Aorta (tissue), 5 donors: ENCODE measurements at regions of chr16 and their contacts with region 1.

Region 1: GRCh38 chr16:57863434-57864160 is 61.3 kb upstream of the KIFC3 start:
- DNase-seq: peak; percentile 77 to 82
- ATAC-seq: peak; percentile 82
- H3K4me3 ChIP-seq: no peak overlapping the region
- H3K27ac ChIP-seq: no peak overlapping the region
- H3K4me1 ChIP-seq: no peaks in the 10 kb centered on the region
- H3K27me3 ChIP-seq: peaks cover 0 to 1% of the 10 kb centered on the region in 2 donors

Region 2: DNA sequence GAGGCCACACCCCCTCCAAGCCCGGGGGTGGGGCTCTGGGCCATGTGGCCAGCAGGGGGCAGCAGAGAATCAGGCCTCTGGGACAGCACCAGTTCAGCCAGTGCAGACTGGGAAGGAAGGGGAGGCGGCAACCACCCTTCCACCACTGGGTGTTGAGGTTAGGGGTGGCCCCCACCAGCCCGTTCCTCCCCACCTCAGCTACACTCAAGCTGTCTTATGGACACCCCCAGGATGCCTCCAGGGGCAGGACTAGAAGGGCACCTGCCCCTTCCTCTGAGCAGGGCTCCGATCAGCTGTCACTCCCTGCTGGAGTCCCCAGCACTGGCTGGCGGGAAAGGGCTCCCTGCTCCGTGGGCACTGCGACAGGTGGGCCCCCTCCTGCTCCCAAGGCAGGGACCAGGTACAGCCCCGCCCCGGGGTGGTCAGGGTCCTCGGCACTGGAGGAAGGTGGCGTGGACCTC is 106.2 kb before region 1 on chr16:
- intact Hi-C with region 1: loop called (anchors 1 to 2 kb)
- DNase-seq: peak; percentile 92 to 97
- ATAC-seq: peak; percentile 88
- H3K4me3 ChIP-seq: no peak overlapping the region
- H3K27ac ChIP-seq: no peak overlapping the region
- H3K4me1 ChIP-seq: no peaks in the 10 kb centered on the region
- H3K27me3 ChIP-seq: no peaks in the 10 kb centered on the region

Region 3: DNA sequence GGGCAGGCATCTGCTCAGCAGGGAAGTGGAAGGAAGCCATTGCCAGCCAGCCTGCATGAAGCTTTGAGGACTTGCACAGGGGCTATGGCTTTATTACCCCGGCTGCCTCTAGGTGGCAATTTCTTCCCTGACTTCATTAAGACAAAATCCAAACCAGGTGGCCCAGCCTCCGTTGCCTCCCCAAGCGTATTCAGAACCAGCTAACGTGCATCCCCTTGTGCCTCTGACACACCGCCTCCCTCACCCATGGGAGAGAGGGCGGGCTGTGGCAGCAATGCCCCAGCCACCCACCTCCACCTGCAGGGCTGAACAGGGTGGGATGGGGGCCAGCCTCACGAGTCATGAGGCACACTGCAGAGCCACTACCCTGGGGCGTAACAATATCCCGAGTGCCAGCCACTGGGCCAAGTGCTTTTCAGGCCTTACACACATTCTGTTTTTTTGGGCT is 68.1 kb before region 1 on chr16:
- intact Hi-C with region 1: loop called in 1 of 2 experiments (anchors 5 kb)
- DNase-seq: no peak
- ATAC-seq: no peak
- H3K4me3 ChIP-seq: no peak overlapping the region
- H3K27ac ChIP-seq: no peak overlapping the region
- H3K4me1 ChIP-seq: no peaks in the 10 kb centered on the region
- H3K27me3 ChIP-seq: no peaks in the 10 kb centered on the region